Activated naive CD4-positive, alpha-beta T cell treated with anti-CD3 and anti-CD28 coated beads for 36 hours (primary cell): ENCODE measurements at regions of chr4 and their contacts with region 1.

Region 1: DNA sequence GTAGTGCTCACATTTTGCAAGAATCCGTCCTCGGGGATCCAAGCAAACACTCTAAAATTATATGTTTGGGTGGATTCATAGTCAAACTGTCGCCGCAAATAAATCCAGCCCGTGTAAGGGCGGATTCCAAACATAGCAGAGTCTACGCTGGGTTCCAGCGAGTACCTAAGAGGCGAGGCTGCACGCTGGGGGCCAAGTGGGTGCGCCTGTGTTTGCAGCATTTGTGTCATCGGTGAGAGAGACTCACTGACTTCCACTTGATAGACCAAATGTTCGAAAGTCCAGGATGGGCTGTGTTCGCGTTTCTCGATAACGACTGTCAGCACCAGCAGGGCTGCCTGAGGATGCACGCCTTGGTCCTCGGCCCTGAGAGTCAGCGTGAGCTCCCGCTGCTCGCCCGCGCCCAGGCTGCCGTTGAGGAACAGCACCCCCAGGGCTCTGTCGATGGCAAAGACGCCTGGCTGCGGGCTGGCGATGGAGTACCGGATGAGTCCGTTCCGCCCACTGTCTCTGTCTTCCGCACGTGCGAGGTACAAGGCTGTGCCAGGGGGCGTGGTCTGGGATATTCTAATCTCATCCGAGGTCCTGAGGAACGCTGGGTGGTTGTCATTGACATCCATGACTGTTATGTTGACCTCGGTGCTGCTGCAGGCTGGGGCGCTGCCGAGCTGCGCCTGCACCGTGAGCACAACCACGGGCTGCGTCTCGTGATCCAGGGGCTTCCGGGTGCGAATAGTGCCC is 158.7 kb downstream of the DCHS2 start:
- DNase-seq: peak; percentile 85
- H3K4me3 Mint-ChIP-seq: peak overlapping the region; percentile 69
- H3K27ac Mint-ChIP-seq: no peak overlapping the region
- H3K4me1 Mint-ChIP-seq: peaks cover 9% of the 10 kb centered on the region
- H3K27me3 Mint-ChIP-seq: peaks cover 14% of the 10 kb centered on the region

Region 2: GRCh38 chr4:153791746-153792617 is 540.9 kb before region 1 on chr4:
- CTCF ChIA-PET with region 1: interaction called, 3 read pairs
- intact Hi-C with region 1: loop called (anchors 5 kb)
- DNase-seq: peak; percentile 85
- H3K4me3 Mint-ChIP-seq: peak overlapping the region; percentile 67
- H3K27ac Mint-ChIP-seq: no peak overlapping the region
- H3K4me1 Mint-ChIP-seq: peaks cover 44% of the 10 kb centered on the region
- H3K27me3 Mint-ChIP-seq: peaks cover 79% of the 10 kb centered on the region

Region 3: DNA sequence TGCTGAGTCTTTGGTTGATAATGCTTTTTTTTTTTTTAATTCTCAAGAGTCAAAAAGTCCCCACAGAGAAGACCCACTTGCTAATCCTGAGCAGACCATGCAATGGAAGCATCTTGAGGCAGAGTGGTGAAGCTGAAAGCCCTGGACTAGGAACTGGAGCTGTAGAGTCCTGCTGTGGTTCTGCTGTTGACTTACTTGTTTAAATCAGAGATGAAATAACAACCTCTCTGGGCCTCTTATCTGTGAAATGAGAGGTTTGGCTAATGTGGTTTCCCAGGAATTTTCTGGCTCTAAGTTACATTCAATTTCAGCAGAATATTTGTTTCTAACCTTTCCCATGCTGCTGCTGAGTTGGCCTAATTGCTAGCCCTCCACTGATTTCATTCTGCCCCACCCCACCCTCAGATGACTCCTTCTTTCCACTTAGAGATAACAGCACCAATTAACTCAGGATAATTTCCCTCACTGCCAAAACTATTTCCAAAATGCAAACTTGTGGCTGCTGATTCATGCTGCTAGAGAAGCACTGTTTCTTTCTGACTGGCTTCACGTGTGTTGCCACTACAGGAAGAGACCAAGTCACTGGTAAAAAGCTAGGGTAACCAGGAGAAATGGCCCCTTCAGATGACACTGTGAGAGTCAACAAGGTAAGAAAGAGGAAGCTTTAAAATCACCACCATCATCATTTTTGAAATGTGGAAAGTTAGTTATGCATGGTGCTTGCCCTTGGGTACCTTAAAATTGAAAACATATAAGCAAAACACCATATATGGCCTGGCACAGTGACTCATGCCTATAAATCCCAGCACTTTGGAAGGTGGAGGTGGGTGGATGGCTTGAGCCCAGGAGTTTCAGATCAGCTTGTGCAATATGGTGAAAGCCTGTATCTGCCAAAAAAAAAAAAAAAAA is 167.7 kb before region 1 on chr4:
- CTCF ChIA-PET with region 1: no interaction called
- intact Hi-C with region 1: loop called (anchors 2 kb)
- DNase-seq: peak; percentile 66
- H3K4me3 Mint-ChIP-seq: no peak overlapping the region
- H3K27ac Mint-ChIP-seq: peak overlapping the region; percentile 48
- H3K4me1 Mint-ChIP-seq: peaks cover 15% of the 10 kb centered on the region
- H3K27me3 Mint-ChIP-seq: peaks cover 13% of the 10 kb centered on the region

Region 4: GRCh38 chr4:154491341-154492271 is 158.8 kb after region 1 on chr4 and contains the start of gene DCHS2:
- CTCF ChIA-PET with region 1: no interaction called
- intact Hi-C with region 1: loop called (anchors 5 kb)
- DNase-seq: peak; percentile 45
- H3K4me3 Mint-ChIP-seq: peak within 1 kb of the TSS; percentile 66
- H3K27ac Mint-ChIP-seq: no peak within 1 kb of the TSS
- H3K4me1 Mint-ChIP-seq: peaks cover 16% of the 10 kb centered on the region
- H3K27me3 Mint-ChIP-seq: peaks cover 66% of the 10 kb centered on the region
- total RNA-seq, gene DCHS2: not detected

Region 5: DNA sequence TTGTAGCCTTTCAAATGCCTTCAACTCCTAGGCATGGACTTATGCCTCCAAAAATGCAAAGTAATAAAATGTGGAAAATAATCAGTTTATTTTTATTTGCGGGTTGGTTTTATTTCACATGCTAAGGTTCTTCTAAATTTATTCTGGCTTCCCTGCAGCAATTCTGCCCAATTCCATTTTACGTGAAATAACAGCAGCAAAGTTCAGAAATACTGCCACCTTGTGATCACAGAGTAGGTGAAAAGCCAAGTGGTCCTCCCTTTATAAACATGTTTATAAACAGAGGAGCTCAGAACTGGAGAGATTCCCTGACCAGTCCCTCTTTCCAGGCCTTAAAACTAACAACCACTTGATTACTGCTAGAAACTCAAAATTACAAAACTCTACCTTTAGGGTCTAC is 173.4 kb after region 1 on chr4:
- CTCF ChIA-PET with region 1: interaction called, 4 read pairs
- intact Hi-C with region 1: loop called (anchors 1 kb)
- DNase-seq: no peak
- H3K4me3 Mint-ChIP-seq: no peak overlapping the region
- H3K27ac Mint-ChIP-seq: no peak overlapping the region
- H3K4me1 Mint-ChIP-seq: no peaks in the 10 kb centered on the region
- H3K27me3 Mint-ChIP-seq: peaks cover 31% of the 10 kb centered on the region

Region 6: GRCh38 chr4:154618708-154619315 is 286.0 kb after region 1 on chr4:
- CTCF ChIA-PET with region 1: no interaction called
- intact Hi-C with region 1: loop called (anchors 1 kb)
- DNase-seq: peak; percentile 77
- H3K4me3 Mint-ChIP-seq: no peak overlapping the region
- H3K27ac Mint-ChIP-seq: no peak overlapping the region
- H3K4me1 Mint-ChIP-seq: peaks cover 10% of the 10 kb centered on the region
- H3K27me3 Mint-ChIP-seq: peaks cover under 1% of the 10 kb centered on the region

Region 7: DNA sequence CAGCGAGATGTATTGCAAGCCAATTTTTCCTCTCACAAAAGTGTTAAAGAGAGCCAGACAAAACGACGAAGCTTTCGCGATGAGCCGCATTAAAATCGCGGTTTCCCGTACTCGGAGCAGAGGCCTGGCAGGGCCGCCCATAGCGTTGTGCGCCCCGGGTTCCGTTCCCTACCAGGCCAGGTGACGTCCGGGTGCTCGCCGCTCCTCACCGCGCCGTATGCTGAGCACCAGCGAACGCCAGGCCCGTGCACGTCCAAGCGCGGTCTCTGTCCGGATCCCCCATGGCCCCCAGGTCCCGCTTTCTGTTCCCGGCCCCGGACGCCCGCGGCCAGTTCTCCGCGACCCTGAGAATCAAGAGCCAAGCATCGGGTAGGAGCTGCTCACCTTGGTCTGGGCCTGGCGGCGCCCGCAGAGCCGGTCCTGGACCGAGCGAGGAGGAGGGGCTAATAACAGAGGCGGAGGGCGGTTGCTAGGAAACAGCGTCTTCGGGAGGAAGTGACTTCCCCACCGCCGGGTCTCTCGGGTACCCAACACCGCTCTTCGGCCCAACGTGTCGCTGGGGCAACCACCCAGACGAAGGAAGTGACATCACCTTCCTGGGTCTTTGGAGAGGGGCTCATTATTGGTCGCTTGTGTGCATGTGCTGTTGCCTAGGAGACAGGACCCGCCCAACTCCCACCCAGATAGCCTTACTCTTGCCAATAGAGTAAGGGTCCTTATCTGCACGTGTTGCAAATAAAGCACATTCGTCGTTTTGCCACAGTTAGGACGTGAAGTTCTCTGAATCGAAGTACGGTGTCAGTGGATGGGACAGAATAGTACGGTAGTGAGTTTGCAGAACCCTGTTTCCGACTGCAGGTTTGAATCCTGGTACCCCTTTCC is 1043.8 kb after region 1 on chr4 and contains the start of gene MAP9:
- CTCF ChIA-PET with region 1: no interaction called
- intact Hi-C with region 1: loop called (anchors 10 kb)
- DNase-seq: peak; percentile 91
- H3K4me3 Mint-ChIP-seq: peak within 1 kb of the TSS; percentile 81
- H3K27ac Mint-ChIP-seq: peak within 1 kb of the TSS; percentile 78
- H3K4me1 Mint-ChIP-seq: peaks cover 11% of the 10 kb centered on the region
- H3K27me3 Mint-ChIP-seq: no peaks in the 10 kb centered on the region
- total RNA-seq, gene MAP9: 5.3 to 6.2 TPM